ENCODE measurements at regions of chr11 and their contacts with region 1.

Region 1: DNA sequence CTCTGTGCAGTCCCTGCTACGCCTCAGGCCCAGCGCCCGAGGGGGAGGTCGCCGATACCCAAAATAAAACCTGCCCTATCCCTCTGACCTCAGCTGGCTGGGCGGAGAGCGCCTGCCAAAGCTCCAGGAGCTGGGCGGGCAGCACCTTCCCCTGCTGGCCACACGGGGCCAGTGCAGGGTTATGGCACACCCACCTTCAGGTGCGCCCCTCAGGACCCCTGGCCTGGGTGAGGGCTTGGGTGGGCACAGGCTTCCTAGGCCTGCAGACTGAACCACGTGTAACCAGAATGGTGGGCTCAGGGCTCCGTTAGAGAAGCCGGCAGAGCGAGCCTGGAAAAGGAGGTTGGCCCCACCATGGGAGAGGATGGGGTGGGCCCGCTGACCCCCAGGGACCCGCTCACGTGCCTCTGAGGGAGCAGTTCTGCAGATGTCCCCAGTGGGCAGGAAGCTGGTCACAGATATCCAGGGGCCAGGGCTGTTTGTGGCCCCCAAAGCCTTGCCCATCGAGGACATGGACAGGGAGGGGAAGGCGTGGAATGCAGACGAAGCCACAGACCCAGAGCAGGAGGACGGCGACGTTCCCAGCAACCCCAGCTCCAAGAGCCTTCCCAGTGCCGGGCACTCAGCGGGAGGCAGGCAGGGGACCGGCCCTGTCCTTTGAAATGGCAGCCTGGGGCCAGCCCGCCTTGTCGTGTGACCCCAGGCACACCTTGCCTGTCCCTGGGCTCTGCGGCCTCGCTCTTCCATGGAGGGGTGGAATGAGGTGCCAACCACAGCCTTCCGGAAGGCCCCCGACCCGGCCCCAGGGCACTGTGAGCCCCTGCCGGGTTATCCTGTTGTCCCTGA is 1.6 kb upstream of the TNNT3 start:
- DNase-seq: no peak
- H3K4me3 ChIP-seq: no peak overlapping the region
- H3K27ac ChIP-seq: peak overlapping the region in 1 of 4 donors; percentile 32
- H3K4me1 ChIP-seq: no peaks in the 10 kb centered on the region
- H3K27me3 ChIP-seq: no peaks in the 10 kb centered on the region
- CTCF ChIP-seq: peak in 1 of 4 experiments; percentile 18
- EP300 ChIP-seq: no peak
- POLR2A ChIP-seq: no peak

Region 2: GRCh38 chr11:1837171-1838076 is 80.5 kb before region 1 on chr11:
- intact Hi-C with region 1: loop called (anchors 5 kb)
- DNase-seq: peak; percentile 82
- H3K4me3 ChIP-seq: no peak overlapping the region
- H3K27ac ChIP-seq: no peak overlapping the region
- H3K4me1 ChIP-seq: peaks cover 0 to 12% (median 11%) of the 10 kb centered on the region in 4 donors
- H3K27me3 ChIP-seq: no peaks in the 10 kb centered on the region
- CTCF ChIP-seq: peak; percentile 85 to 91 (median 86)
- EP300 ChIP-seq: no peak
- POLR2A ChIP-seq: no peak

Region 3: DNA sequence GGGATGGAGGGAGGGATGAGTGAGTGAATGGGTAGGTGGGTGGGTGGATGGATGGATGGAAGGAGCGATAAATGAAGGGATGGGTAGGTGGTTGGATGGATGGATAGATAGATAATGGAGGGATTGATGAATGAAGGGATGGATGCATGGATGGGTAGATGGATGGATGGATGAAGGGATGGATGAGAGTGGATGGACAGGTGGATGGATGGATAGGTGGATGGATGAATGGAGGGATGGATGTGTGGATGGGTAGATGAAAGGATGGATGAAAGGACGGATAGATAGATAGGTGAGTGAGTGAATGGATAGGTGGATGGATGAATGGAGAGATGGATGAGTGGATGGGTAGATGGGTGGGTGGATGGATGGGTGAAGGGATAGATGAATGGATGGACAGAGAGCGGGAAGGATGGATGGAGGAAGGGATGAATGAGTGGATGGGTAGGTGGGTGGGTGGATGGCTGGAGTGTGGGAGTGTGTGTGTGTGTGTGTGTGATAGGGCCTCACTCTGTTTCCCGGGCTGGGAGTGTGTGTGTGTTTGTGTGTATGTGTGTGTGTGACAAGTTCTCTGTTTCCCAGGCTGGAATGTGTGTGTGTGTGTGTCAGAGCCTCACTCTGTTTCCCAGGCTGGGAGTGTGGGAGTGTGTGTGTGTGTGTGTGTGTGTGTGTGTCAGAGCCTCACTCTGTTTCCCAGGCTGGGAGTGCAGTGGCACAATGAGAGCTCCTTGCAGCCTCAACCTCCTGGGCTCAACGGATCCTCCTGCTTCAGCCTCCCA is 24.1 kb before region 1 on chr11:
- intact Hi-C with region 1: loop called (anchors 1 kb)
- DNase-seq: no peak
- H3K4me3 ChIP-seq: no peak overlapping the region
- H3K27ac ChIP-seq: no peak overlapping the region
- H3K4me1 ChIP-seq: no peaks in the 10 kb centered on the region
- H3K27me3 ChIP-seq: peaks cover 0 to 4% (median 0%) of the 10 kb centered on the region in 3 donors
- CTCF ChIP-seq: no peak
- EP300 ChIP-seq: no peak
- POLR2A ChIP-seq: no peak

Region 4: GRCh38 chr11:1939006-1939625 is 21.2 kb after region 1 on chr11:
- intact Hi-C with region 1: loop called (anchors 1 kb)
- DNase-seq: peak; percentile 71
- H3K4me3 ChIP-seq: peak overlapping the region in 1 of 4 donors; percentile 2
- H3K27ac ChIP-seq: peak overlapping the region in 2 of 4 donors; percentile 12 to 42
- H3K4me1 ChIP-seq: peaks cover 0 to 6% (median 3%) of the 10 kb centered on the region in 4 donors
- H3K27me3 ChIP-seq: peaks cover 0 to 5% (median 0%) of the 10 kb centered on the region in 3 donors
- CTCF ChIP-seq: no peak
- EP300 ChIP-seq: no peak
- POLR2A ChIP-seq: no peak

Measured in sigmoid colon (tissue), 7 donors.